HEK293 (cell line): ENCODE measurements at regions of chr16 and their contacts with region 1.

Region 1: DNA sequence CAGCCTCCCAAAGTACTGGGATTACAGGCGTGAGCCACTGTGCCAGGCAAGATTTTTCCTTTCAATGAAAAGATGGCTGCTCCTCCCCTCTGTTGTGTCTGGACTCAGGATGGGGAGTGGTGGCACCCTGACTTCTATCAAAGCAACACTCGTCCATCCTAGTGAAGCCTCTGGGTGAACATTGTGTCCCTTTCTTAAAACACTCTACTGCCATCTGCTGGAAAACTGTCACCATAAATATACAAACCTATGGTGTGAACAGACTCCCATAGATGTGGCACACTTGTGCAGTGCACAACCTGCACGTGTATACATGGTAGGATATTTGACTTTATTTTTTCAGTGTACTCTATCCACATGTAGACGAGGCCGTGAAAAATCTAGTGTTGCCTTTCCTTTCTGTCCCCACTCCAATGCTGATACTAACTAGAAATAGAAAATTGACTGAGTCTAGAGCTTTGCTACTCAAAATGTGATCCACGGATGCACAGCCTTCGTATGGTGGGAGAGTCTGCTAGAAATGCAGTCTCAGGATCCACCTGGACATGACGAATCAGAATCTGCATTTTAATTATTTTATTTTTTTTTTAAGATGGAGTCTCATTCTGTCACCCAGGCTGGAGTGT is 55.9 kb upstream of the PLCG2 start:
- H3K4me3 ChIP-seq: no peak overlapping the region
- H3K27ac ChIP-seq: no peak overlapping the region
- H3K4me1 ChIP-seq: no peaks in the 10 kb centered on the region
- CTCF ChIP-seq: peak; percentile 64

Region 2: DNA sequence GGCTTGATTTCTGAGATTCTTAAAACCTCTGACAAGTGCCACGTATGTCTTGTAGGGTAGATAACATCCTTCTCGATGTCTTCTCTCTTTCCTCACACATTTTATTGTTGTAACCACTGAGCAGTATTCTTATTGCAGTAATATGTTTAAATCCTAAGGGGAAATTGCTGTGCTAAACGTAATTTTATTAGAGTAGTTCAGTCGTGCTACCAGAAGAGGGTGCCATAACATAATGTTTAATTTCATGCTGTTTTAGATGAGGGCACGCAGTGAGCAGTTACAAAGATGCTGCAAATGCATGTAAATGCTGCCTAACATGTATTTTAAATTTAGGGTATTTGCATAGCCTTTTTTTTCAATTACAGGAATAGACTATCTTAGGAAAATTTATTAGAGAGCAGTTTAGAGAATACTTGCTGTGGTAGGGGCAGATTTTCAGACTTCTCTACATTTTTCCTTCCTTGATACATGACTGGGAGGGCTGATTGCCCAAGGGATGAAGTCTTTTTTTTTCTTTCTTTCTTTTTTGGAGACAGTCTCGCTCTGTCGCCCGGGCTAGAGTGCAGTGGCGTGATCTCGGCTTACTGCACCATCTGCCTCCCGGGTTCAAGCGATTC is 356.8 kb before region 1 on chr16:
- CTCF ChIA-PET with region 1: interaction called, 18 read pairs
- POLR2A ChIA-PET with region 1: no interaction called
- H3K4me3 ChIP-seq: no peak overlapping the region
- H3K27ac ChIP-seq: no peak overlapping the region
- H3K4me1 ChIP-seq: no peaks in the 10 kb centered on the region
- CTCF ChIP-seq: peak; percentile 53

Region 3: GRCh38 chr16:81415751-81416150 is 307.5 kb before region 1 on chr16:
- CTCF ChIA-PET with region 1: no interaction called
- POLR2A ChIA-PET with region 1: no interaction called
- H3K4me3 ChIP-seq: no peak overlapping the region
- H3K27ac ChIP-seq: no peak overlapping the region
- H3K4me1 ChIP-seq: no peaks in the 10 kb centered on the region
- CTCF ChIP-seq: no peak

Region 4: DNA sequence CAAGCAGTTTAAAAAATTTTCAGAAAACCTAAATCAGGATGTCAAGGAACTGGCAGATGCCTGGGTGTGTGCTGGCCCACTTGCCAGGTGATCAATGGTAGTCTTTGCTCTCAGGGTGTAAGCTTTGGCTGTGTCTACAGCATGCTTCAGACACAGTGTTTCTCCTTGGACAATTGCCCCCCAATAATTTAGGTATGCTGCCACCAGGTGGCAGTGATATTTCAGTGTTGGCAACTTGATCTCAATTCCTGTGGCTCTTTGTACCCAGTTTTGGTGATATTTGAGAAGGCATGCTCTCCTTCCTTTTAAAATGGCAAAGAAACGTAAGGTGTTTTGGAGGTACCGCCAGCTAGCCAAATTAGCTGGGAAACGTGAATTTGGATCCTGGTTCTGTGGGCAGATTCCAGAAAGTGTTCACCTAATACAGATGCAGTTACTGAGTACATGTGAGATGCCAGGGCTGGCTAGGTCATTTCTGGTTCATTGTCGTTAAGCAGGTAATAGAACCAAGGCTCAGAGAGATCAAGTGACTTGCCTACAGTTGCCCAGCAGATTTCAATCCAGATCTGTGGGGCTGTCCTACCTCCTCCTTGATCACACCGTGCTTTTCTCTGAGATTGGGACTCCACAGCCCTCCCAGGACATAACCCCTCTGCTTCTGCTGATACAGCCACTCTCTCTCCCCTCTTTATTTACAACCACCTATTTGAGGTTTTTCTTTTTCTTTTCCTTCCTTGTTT is 99.7 kb before region 1 on chr16:
- CTCF ChIA-PET with region 1: interaction called, 15 read pairs
- POLR2A ChIA-PET with region 1: no interaction called
- H3K4me3 ChIP-seq: no peak overlapping the region
- H3K27ac ChIP-seq: no peak overlapping the region
- H3K4me1 ChIP-seq: no peaks in the 10 kb centered on the region
- CTCF ChIP-seq: peak; percentile 54; the same call in 1 of the 2 replicates